Mammary epithelial cell (primary cell): ENCODE measurements at regions of chr1 and their contacts with region 1.

Region 1: DNA sequence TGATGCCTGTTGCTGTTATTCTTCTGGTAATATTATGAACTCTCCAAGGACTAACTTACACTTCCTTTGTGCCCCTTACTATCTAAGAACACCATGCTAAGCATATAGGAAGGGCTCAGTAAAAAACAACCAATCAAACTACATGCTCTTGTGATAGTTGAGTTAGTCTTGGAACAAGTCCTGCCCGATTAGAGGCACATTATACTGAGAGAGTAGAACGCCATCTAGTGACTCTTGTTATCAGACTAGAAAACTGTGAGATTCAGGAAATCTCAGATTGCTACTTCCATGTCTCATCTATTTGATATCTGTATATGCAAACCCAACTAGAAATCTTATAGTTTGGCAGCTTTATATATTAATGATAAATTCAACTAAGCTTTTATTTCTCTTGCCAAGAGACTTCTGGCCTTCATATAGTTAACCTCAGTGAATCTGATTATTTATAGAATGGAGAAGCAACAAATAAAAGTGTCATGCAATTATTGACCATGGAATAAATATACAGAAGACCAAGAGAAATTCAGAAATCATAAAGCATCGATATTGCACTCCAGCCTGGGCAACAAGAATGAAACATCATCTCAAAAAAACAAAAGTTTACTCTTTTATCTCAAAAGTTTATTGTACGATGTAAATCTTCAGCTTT is 7.8 kb upstream of the SRRM1 start:
- DNase-seq: peak; percentile 61
- H3K4me3 ChIP-seq: no peak overlapping the region
- H3K27ac ChIP-seq: no peak overlapping the region
- H3K4me1 ChIP-seq: no peaks in the 10 kb centered on the region
- H3K27me3 ChIP-seq: no peaks in the 10 kb centered on the region
- CTCF ChIP-seq: peak; percentile 58 to 72

Region 2: DNA sequence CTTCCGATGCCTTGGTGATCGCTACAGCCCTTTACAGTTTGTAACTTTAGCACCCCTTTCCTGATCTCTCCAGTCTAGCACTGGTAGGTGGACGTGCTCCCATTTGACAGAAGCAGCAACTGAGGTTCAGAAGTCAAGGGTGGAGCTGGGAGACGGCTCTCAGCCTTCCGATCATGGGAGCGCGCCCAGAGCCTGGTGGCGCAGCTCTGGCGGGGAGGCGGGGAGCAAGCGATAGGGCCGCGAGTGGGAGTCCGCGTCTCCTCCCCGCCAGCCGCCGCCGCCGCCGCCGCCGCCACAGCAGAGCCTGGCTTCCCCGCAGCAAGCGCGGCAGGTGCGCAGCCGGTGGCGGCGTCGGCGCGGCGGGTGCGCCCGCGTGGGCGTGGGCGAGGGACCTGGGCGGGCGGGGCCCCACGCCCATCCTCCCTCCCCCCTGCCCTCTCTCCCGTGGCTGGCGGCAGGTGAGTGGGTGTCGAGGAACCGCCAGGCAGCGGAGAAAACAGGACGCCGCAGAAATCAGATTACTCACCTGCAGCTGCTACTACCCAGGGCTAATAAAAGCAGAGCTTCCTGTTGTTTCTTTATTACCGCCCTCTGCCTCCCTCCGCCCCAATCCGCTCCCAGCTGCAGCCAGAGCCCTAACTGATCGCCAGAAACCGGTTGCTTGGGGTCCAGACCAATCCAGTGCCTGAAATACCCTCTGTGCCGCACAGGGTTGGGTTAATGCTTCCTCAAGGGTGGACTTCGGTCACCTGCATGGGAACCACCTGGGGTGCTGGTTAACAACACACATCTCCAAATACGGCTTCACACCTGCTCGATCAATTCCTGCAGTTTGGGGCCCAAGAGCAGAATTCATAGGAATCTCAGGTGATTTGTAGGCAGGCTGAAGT is 1015.8 kb before region 1 on chr1:
- CTCF ChIA-PET with region 1: interaction called, 16 read pairs
- dilution Hi-C with region 1: no loop called
- in situ Hi-C with region 1: no loop called
- intact Hi-C with region 1: no loop called
- DNase-seq: peak; percentile 74
- H3K4me3 ChIP-seq: peak overlapping the region in 2 of 3 experiments; percentile 16 to 25
- H3K27ac ChIP-seq: no peak overlapping the region
- H3K4me1 ChIP-seq: peaks cover 8% of the 10 kb centered on the region
- H3K27me3 ChIP-seq: no peaks in the 10 kb centered on the region
- CTCF ChIP-seq: no peak

Region 3: GRCh38 chr1:24321697-24322469 is 313.4 kb before region 1 on chr1:
- CTCF ChIA-PET with region 1: no interaction called
- dilution Hi-C with region 1: no loop called
- in situ Hi-C with region 1: no loop called
- intact Hi-C with region 1: loop called (anchors 2 kb)
- DNase-seq: peak; percentile 98
- H3K4me3 ChIP-seq: peak overlapping the region; percentile 17 to 57 (median 40)
- H3K27ac ChIP-seq: peak overlapping the region; percentile 92
- H3K4me1 ChIP-seq: peaks cover 65% of the 10 kb centered on the region
- H3K27me3 ChIP-seq: no peaks in the 10 kb centered on the region
- CTCF ChIP-seq: peak in 1 of 2 donors; percentile 12

Region 4: DNA sequence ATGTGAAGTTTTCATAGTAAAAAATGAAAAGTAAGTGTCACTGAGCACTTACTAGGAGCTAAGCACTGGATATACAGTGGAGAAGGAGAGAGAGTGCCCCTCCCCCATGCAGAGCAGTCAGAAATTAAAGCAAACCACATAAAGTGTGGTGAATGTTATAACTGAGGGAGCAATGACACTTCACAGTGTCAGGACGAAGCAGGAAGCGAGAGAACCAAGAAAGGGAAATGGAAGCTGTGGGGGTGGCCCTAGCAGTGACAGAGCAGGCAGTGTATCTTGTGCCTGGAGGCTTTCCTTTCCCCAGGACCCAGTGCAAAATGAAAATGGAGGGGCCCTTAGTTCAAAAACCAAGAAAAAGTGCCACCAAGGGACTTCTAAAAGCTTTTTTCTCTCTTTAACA is 154.2 kb before region 1 on chr1:
- CTCF ChIA-PET with region 1: no interaction called
- dilution Hi-C with region 1: no loop called
- in situ Hi-C with region 1: no loop called
- intact Hi-C with region 1: loop called (anchors 1 kb)
- DNase-seq: no peak
- H3K4me3 ChIP-seq: no peak overlapping the region
- H3K27ac ChIP-seq: no peak overlapping the region
- H3K4me1 ChIP-seq: no peaks in the 10 kb centered on the region
- H3K27me3 ChIP-seq: no peaks in the 10 kb centered on the region
- CTCF ChIP-seq: no peak

Region 5: GRCh38 chr1:24541711-24542346 is 93.5 kb before region 1 on chr1:
- CTCF ChIA-PET with region 1: no interaction called
- dilution Hi-C with region 1: loop called (anchors 5 kb)
- in situ Hi-C with region 1: no loop called
- intact Hi-C with region 1: loop called (anchors 1 kb)
- DNase-seq: no peak
- H3K4me3 ChIP-seq: no peak overlapping the region
- H3K27ac ChIP-seq: no peak overlapping the region
- H3K4me1 ChIP-seq: peaks cover 34% of the 10 kb centered on the region
- H3K27me3 ChIP-seq: no peaks in the 10 kb centered on the region
- CTCF ChIP-seq: peak; percentile 49 to 68

Region 6: GRCh38 chr1:24586970-24587820 is 48.1 kb before region 1 on chr1:
- CTCF ChIA-PET with region 1: interaction called, 3 read pairs
- dilution Hi-C with region 1: loop called (anchors 5 kb)
- in situ Hi-C with region 1: no loop called
- intact Hi-C with region 1: loop called (anchors 2 kb)
- DNase-seq: peak; percentile 39
- H3K4me3 ChIP-seq: no peak overlapping the region
- H3K27ac ChIP-seq: no peak overlapping the region
- H3K4me1 ChIP-seq: peaks cover 12% of the 10 kb centered on the region
- H3K27me3 ChIP-seq: no peaks in the 10 kb centered on the region
- CTCF ChIP-seq: peak; percentile 81 to 85

Region 7: GRCh38 chr1:24673336-24673735 is 38.0 kb after region 1 on chr1:
- CTCF ChIA-PET with region 1: no interaction called
- dilution Hi-C with region 1: no loop called
- in situ Hi-C with region 1: no loop called
- intact Hi-C with region 1: no loop called
- DNase-seq: peak; percentile 38
- H3K4me3 ChIP-seq: no peak overlapping the region
- H3K27ac ChIP-seq: peak overlapping the region; percentile 3
- H3K4me1 ChIP-seq: peaks cover 9% of the 10 kb centered on the region
- H3K27me3 ChIP-seq: no peaks in the 10 kb centered on the region
- CTCF ChIP-seq: no peak